ENCODE measurements at regions of chr17 and their contacts with region 1.

Region 1: GRCh38 chr17:19753049-19753444 is 4.9 kb upstream of the ALDH3A1 start:
- DNase-seq: peak; percentile 66 to 86 (median 73)
- ATAC-seq: peak; percentile 92 to 98 (median 96)
- H3K4me3 ChIP-seq: no peak overlapping the region
- H3K27ac ChIP-seq: peak overlapping the region; percentile 36 to 86 (median 60)
- H3K4me1 ChIP-seq: peaks cover 0 to 15% (median 2%) of the 10 kb centered on the region in 12 donors
- H3K27me3 ChIP-seq: no peaks in the 10 kb centered on the region
- CTCF ChIP-seq: no peak
- POLR2A ChIP-seq: no peak

Region 2: DNA sequence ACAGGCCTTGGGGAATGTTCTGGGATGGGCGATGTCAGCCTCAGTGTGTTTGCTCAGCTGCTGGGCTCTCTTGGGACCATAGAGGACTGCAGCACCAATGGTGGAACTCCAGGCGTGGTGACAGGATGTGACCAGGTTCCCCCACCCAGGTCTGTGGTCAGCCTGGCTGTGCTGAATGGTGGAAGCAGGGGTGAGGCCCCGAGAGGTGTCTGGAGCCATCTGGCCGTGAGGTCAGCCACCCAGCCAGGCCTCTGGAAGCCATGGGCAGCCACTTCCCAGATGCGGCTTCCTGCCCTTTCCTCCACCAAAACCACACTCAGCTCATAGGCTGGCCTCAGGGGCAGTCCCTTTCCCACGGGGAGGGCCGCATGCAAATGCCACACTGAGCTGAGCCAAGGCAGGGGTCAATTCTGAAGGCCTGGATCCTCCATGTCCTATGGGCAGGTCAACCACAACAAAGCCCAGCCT is 382.5 kb before region 1 on chr17:
- intact Hi-C with region 1: loop called in 1 of 10 experiments (anchors 5 kb)
- DNase-seq: peak; percentile 59 to 83 (median 78)
- ATAC-seq: peak; percentile 63 to 91 (median 81)
- H3K4me3 ChIP-seq: no peak overlapping the region
- H3K27ac ChIP-seq: peak overlapping the region; percentile 9 to 73 (median 62)
- H3K4me1 ChIP-seq: peaks cover 0 to 50% (median 16%) of the 10 kb centered on the region in 12 donors
- H3K27me3 ChIP-seq: no peaks in the 10 kb centered on the region
- CTCF ChIP-seq: no peak
- POLR2A ChIP-seq: no peak

Region 3: GRCh38 chr17:19533718-19534561 is 219.1 kb before region 1 on chr17 and contains the start of gene SLC47A1:
- intact Hi-C with region 1: loop called in 1 of 10 experiments (anchors 5 kb)
- DNase-seq: peak in 4 of 5 donors; percentile 35 to 66 (median 58)
- ATAC-seq: peak; percentile 46 to 95 (median 91)
- H3K4me3 ChIP-seq: peak within 1 kb of the TSS; percentile 41 to 88 (median 66)
- H3K27ac ChIP-seq: peak within 1 kb of the TSS in 6 of 12 donors; percentile 34 to 67 (median 46)
- H3K4me1 ChIP-seq: peaks cover 0 to 22% (median 3%) of the 10 kb centered on the region in 12 donors
- H3K27me3 ChIP-seq: peaks cover 0 to 36% (median 4%) of the 10 kb centered on the region in 9 donors
- CTCF ChIP-seq: no peak
- POLR2A ChIP-seq: no peak
- total RNA-seq, gene SLC47A1: 5.8 to 25.5 (median 12.4) TPM

Region 4: DNA sequence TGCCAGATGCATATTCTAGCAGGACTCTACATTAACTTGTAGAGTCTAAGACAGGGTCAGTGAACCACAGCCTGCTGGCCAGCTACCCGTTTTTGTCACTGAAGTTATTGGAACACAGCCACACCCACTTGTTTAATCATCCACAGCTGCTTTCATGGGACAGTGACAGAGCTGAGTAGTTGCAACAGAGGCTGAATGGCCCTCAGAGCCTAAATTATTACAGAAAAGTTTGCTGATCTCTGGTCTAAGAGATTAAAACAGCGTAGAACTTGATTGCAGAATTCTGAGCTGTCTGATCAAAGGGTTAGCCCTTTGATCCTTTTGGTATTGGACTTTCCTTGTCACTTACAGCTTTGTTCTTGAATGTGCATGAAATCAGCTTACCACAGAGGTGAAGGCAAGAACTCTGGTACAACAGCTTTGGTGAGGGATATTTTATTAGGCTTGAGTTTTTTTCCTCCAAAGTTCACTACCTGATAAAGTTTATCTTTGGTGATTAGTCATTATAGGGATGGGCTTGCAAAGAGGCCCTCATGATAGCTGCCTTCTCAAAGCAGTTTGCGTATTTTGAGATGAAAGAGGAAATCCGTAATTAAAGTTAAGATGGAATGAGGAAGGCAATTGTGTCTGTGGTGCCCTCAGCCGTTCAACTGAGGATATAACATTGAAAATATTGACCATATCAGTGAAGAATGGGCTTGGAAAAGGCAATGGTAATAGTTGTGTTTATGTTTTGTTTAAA is 80.9 kb before region 1 on chr17:
- intact Hi-C with region 1: loop called in 2 of 10 experiments (anchors 10 kb)
- DNase-seq: peak in 4 of 5 donors; percentile 52 to 73 (median 63)
- ATAC-seq: peak; percentile 74 to 96 (median 92)
- H3K4me3 ChIP-seq: no peak overlapping the region
- H3K27ac ChIP-seq: peak overlapping the region; percentile 3 to 75 (median 49)
- H3K4me1 ChIP-seq: peaks cover 0 to 34% (median 18%) of the 10 kb centered on the region in 12 donors
- H3K27me3 ChIP-seq: no peaks in the 10 kb centered on the region
- CTCF ChIP-seq: peak in 4 of 12 donors; percentile 5 to 15 (median 12)
- POLR2A ChIP-seq: no peak

Region 5: GRCh38 chr17:19706791-19707727 is 46.0 kb before region 1 on chr17:
- intact Hi-C with region 1: loop called in 2 of 10 experiments (anchors 5 to 10 kb)
- DNase-seq: no peak
- ATAC-seq: no peak
- H3K4me3 ChIP-seq: no peak overlapping the region
- H3K27ac ChIP-seq: no peak overlapping the region
- H3K4me1 ChIP-seq: peaks cover 0 to 23% (median 10%) of the 10 kb centered on the region in 12 donors
- H3K27me3 ChIP-seq: no peaks in the 10 kb centered on the region
- CTCF ChIP-seq: no peak
- POLR2A ChIP-seq: no peak

Region 6: DNA sequence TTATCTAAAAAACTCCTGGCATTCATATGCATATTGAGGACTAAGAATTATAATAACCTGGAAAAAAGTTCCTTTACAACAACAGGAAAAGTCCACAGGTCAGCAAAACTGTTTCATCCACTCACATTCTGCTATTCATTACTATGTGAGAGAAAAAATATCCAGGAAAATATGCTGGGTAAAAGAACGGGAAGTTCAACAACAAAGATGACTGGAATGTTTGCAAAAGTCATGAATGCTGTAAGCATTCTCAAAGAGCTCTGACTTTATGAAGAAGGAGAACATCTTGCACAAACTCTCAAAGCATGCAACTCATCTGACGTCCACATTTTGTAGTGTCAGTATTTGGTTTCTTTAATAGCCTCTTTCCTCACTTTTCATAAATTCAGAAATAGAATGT is 52.0 kb after region 1 on chr17:
- intact Hi-C with region 1: no loop called
- DNase-seq: no peak
- ATAC-seq: no peak
- H3K4me3 ChIP-seq: no peak overlapping the region
- H3K27ac ChIP-seq: no peak overlapping the region
- H3K4me1 ChIP-seq: no peaks in the 10 kb centered on the region
- H3K27me3 ChIP-seq: no peaks in the 10 kb centered on the region
- CTCF ChIP-seq: no peak
- POLR2A ChIP-seq: no peak

Measured in heart left ventricle (tissue), 16 donors.